Endothelial cell of umbilical vein (primary cell): ENCODE measurements at regions of chrX and their contacts with region 1.

Region 1: GRCh38 chrX:40169193-40170101 is 71.7 kb upstream of the BCOR start:
- DNase-seq: peak; percentile 78
- H3K4me3 ChIP-seq: no peak overlapping the region
- H3K27ac ChIP-seq: no peak overlapping the region
- H3K4me1 ChIP-seq: peaks cover 33% of the 10 kb centered on the region
- H3K27me3 ChIP-seq: no peaks in the 10 kb centered on the region
- CTCF ChIP-seq: peak; percentile 52 to 56
- POLR2A ChIP-seq: no peak

Region 2: DNA sequence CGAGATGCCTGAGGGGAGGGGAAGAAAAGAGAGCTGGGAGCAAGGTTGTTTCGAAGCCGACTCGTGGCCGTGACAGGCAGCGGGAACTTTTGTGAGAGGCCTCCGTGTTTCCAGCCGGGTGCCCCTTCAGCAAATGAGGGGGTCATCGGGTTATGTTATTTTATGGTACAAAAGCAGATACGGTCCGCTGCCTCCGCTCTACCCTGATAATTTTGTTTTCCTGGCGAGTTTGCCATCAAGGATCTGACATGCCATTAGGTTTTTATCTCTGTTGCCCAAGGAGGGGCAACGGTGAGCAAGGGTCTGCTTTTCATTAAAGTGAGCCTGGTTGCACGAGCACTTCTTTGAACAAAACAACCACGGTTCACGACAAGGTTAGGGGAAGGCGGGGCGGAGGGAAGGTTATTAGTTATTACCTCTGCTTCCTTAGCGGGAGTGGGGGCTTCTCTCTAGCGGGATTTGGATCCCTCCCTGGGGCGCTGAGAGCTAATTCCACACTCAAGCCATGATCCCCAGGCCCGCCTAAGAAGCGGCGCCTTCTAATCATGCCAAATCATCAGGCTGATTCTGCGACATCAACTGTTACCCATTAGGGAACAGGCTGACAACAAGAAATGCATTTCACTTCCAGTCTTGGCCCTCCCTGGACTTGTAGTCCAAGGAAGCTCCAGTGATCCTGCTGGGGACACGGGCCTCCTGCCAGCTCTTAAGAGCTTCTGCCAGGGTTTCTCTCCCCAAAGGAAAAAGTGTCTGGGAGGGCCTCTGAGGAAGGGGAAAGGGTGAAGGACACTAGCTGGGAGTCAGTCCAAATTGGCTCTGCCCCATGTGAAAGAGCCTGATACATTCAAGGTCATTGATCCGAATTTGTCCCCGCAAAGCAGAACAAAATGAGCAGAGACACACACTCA is 750.5 kb before region 1 on chrX:
- CTCF ChIA-PET with region 1: no interaction called
- POLR2A ChIA-PET with region 1: no interaction called
- dilution Hi-C with region 1: no loop called
- intact Hi-C with region 1: loop called (anchors 5 kb)
- DNase-seq: peak; percentile 73
- H3K4me3 ChIP-seq: no peak overlapping the region
- H3K27ac ChIP-seq: peak overlapping the region; percentile 91
- H3K4me1 ChIP-seq: peaks cover 25% of the 10 kb centered on the region
- H3K27me3 ChIP-seq: no peaks in the 10 kb centered on the region
- CTCF ChIP-seq: no peak
- POLR2A ChIP-seq: no peak

Region 3: GRCh38 chrX:39755143-39756032 is 414.1 kb before region 1 on chrX:
- CTCF ChIA-PET with region 1: no interaction called
- POLR2A ChIA-PET with region 1: no interaction called
- dilution Hi-C with region 1: no loop called
- intact Hi-C with region 1: loop called (anchors 1 kb)
- DNase-seq: peak; percentile 92
- H3K4me3 ChIP-seq: no peak overlapping the region
- H3K27ac ChIP-seq: peak overlapping the region; percentile 95
- H3K4me1 ChIP-seq: peaks cover 64% of the 10 kb centered on the region
- H3K27me3 ChIP-seq: no peaks in the 10 kb centered on the region
- CTCF ChIP-seq: no peak
- POLR2A ChIP-seq: no peak

Region 4: GRCh38 chrX:39907964-39908616 is 261.4 kb before region 1 on chrX:
- CTCF ChIA-PET with region 1: no interaction called
- POLR2A ChIA-PET with region 1: no interaction called
- dilution Hi-C with region 1: no loop called
- intact Hi-C with region 1: loop called (anchors 5 kb)
- DNase-seq: peak; percentile 45
- H3K4me3 ChIP-seq: no peak overlapping the region
- H3K27ac ChIP-seq: peak overlapping the region; percentile 72
- H3K4me1 ChIP-seq: peaks cover 21% of the 10 kb centered on the region
- H3K27me3 ChIP-seq: no peaks in the 10 kb centered on the region
- CTCF ChIP-seq: no peak
- POLR2A ChIP-seq: no peak

Region 5: DNA sequence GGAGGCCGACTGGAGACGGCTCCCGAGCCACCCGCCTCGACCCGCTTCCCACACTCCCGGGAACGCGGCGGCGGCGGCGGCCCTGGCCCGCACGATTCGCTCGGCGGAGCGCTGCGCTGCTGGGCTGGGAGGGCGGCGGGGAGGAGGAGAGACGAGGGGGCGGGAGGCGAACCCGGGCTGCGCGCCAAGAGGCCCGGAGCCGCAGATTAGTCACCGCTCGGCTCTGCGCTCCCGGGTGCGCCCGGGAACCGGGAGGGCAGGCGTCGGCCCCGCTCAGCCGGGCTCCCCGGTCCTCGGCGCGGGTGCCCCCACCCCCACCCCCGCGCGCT is 60.5 kb before region 1 on chrX:
- CTCF ChIA-PET with region 1: no interaction called
- POLR2A ChIA-PET with region 1: no interaction called
- dilution Hi-C with region 1: no loop called
- intact Hi-C with region 1: loop called (anchors 1 kb)
- DNase-seq: peak; percentile 73
- H3K4me3 ChIP-seq: peak overlapping the region; percentile 13 to 38 (median 36)
- H3K27ac ChIP-seq: peak overlapping the region; percentile 70
- H3K4me1 ChIP-seq: peaks cover 13% of the 10 kb centered on the region
- H3K27me3 ChIP-seq: no peaks in the 10 kb centered on the region
- CTCF ChIP-seq: no peak
- POLR2A ChIP-seq: no peak

Region 6: DNA sequence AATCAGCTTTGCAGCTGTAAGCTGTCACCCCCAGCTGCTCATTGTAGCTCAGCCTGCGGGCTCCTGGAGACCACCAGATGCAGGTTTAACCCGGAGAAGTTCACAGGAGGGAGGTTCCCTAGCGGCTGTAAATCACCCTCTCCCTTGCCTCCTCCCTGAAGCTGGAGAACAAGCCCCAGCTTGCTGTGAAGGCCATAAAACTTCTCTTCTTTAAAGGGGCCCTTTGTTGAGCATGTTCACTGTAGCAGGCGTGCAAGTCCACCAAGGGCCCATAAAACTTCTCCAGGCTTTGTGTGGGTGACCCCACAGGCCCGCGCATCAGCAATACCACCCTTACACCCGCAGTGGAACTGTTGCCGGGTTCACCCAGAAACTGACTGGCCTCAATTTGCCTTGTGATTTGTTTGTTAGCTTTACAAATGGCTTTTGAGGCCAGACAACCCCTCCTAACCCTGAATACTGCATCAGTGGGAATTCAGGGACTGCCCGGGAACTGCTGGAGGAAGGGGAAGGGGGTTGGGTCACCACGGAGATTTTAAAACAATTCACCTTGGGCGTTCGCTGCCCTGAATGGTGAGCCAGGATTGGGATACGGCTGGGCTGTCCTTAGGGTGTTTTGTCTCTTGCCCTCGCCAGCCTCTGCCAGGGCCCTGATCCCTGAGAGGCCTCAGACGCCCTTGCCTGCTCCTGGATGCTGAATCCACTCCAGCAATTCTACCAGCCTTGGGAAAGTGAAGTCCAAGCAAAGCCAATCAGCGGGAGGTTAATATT is 361.8 kb after region 1 on chrX:
- CTCF ChIA-PET with region 1: no interaction called
- POLR2A ChIA-PET with region 1: no interaction called
- dilution Hi-C with region 1: no loop called
- intact Hi-C with region 1: no loop called
- DNase-seq: no peak
- H3K4me3 ChIP-seq: no peak overlapping the region
- H3K27ac ChIP-seq: no peak overlapping the region
- H3K4me1 ChIP-seq: no peaks in the 10 kb centered on the region
- H3K27me3 ChIP-seq: peaks cover 0 to 3% of the 10 kb centered on the region in 2 experiments
- CTCF ChIP-seq: no peak
- POLR2A ChIP-seq: no peak